Activated T-helper 2 cell treated with anti-CD3 and anti-CD28 coated beads, Interferon-gamma antibody, Interleukin-2, Interleukin-4, amounts not matched to agents 10 μg/mL and 5 μg/mL and 100 μg/mL, durations not matched to agents 14 hours and 24 hours and 36 hours (primary cell): ENCODE measurements at regions of chr12 and their contacts with region 1.

Region 1: DNA sequence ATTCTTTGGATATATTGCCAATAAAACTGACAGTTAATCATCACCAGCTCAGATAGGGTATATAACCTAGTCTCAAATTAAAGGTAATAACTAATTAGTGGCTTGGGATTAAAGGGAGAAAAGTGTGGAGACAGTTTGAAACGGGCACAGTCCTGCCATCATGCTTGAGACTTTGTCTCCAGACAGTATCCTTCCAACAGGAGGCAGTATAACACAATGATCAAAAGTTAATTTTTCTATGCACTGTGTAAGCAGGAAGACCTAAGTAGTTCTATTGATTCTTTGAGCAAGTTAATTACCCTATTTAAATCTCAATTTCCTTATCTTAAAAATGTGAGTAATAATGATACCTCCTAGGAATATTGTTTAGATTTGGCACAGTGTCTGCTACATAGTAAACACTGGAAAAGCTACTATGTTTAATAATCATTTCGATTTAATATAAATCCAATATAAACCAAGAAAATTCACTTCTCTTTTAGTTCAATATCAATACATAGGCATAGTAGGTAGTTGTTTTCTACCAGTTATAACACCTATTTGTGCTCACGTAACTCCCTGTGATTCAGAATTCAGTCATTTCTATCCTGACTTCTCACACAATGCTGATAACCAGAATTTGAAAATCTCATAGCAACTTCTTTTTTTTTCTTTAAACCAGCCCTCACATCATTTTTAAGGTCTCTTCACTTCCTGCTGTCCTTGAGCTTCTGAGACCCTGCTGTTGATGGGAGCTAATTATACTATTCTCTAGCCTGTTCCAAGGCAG is 53.7 kb downstream of the GALNT4 start:
- DNase-seq: no peak
- H3K4me3 Mint-ChIP-seq: no peak overlapping the region
- H3K27ac Mint-ChIP-seq: peak overlapping the region; percentile 63
- H3K4me1 Mint-ChIP-seq: peaks cover 65% of the 10 kb centered on the region
- H3K27me3 Mint-ChIP-seq: no peaks in the 10 kb centered on the region

Region 2: DNA sequence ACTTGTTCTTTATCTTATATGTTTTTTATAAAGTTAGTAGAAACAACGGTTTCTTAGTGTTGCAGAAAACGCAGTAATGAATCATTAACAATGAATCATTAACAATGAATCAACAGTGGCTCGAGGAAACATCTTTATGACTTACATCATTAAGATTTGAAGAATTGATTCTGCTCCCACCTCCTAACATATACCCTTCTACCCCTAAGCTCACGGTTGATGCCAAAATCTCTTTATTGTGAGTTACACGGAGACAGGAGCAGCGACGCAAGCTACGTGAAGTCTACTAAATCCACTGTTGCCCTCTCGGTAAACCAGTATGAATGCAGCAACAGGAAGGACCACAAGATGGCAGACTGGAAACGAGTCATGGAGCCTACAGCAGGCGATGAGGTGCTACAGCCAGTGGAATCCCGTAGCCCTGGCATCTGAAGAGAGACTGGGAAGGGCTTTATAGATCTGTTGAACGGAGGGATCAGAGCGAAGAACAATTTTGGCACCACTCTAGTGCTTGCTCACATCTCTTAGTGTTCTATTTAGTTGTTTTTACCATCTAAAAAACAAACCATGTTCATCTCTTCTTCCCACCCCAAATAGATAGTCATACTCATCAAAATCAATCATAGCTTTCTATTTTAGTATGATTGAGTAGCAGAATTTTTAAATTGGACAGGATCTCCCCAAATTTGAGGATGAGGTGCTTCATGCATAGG is 451.4 kb before region 1 on chr12:
- intact Hi-C with region 1: loop called (anchors 1 kb)
- DNase-seq: peak; percentile 75
- H3K4me3 Mint-ChIP-seq: no peak overlapping the region
- H3K27ac Mint-ChIP-seq: no peak overlapping the region
- H3K4me1 Mint-ChIP-seq: peaks cover 27% of the 10 kb centered on the region
- H3K27me3 Mint-ChIP-seq: peaks cover 1% of the 10 kb centered on the region

Region 3: GRCh38 chr12:89179983-89180382 is 290.9 kb before region 1 on chr12:
- intact Hi-C with region 1: loop called (anchors 1 kb)
- DNase-seq: no peak
- H3K4me3 Mint-ChIP-seq: peak overlapping the region; percentile 50
- H3K27ac Mint-ChIP-seq: peak overlapping the region; percentile 86
- H3K4me1 Mint-ChIP-seq: peaks cover 71% of the 10 kb centered on the region
- H3K27me3 Mint-ChIP-seq: no peaks in the 10 kb centered on the region

Region 4: DNA sequence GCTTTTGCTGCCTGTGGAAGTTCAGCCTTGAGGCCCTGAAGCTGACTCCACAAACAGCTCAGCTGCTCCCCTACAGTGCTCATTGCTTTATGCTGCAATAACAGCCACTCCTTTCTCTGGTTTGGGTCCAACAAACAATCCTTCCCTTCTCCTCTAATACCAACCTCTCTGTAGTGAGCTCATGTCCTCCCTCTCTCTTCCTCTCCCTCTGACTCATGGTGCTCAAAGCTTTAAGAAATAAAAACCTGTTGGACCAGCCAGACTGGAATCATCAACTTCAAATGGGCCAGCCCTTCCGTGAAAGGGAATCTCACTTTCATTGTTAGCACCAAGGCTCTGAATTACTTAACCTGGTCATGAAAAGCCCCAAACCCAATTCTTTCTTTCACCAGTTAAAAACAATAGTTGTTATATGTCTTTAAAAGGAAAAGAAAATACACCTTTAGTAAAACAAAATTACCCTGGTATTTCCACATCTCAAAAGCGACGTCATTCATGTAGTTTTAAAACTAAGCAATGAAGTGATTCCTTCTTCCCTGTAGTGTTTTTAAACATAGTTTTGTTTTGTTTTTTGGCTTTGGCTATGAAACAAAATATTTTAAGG is 245.0 kb before region 1 on chr12:
- intact Hi-C with region 1: loop called (anchors 2 kb)
- DNase-seq: no peak
- H3K4me3 Mint-ChIP-seq: peak overlapping the region; percentile 70
- H3K27ac Mint-ChIP-seq: peak overlapping the region; percentile 100
- H3K4me1 Mint-ChIP-seq: peaks cover 67% of the 10 kb centered on the region
- H3K27me3 Mint-ChIP-seq: no peaks in the 10 kb centered on the region

Region 5: GRCh38 chr12:89494411-89495231 is 23.7 kb after region 1 on chr12:
- intact Hi-C with region 1: loop called (anchors 1 kb)
- DNase-seq: no peak
- H3K4me3 Mint-ChIP-seq: peak overlapping the region; percentile 9
- H3K27ac Mint-ChIP-seq: peak overlapping the region; percentile 90
- H3K4me1 Mint-ChIP-seq: peaks cover 17% of the 10 kb centered on the region
- H3K27me3 Mint-ChIP-seq: no peaks in the 10 kb centered on the region

Region 6: GRCh38 chr12:89524541-89525285 is 53.8 kb after region 1 on chr12 and contains the start of gene GALNT4:
- intact Hi-C with region 1: loop called (anchors 1 kb)
- DNase-seq: peak; percentile 75
- H3K4me3 Mint-ChIP-seq: peak within 1 kb of the TSS; percentile 99
- H3K27ac Mint-ChIP-seq: peak within 1 kb of the TSS; percentile 99
- H3K4me1 Mint-ChIP-seq: peaks cover 51% of the 10 kb centered on the region
- H3K27me3 Mint-ChIP-seq: no peaks in the 10 kb centered on the region
- total RNA-seq, gene GALNT4: 8.8 and 9.1 TPM in 2 replicates

Region 7: GRCh38 chr12:89529738-89530137 is 58.8 kb after region 1 on chr12:
- intact Hi-C with region 1: loop called (anchors 1 kb)
- DNase-seq: no peak
- H3K4me3 Mint-ChIP-seq: no peak overlapping the region
- H3K27ac Mint-ChIP-seq: no peak overlapping the region
- H3K4me1 Mint-ChIP-seq: peaks cover 34% of the 10 kb centered on the region
- H3K27me3 Mint-ChIP-seq: no peaks in the 10 kb centered on the region